CD8-positive, alpha-beta T cell (primary cell): ENCODE measurements at regions of chr3 and their contacts with region 1.

Region 1: DNA sequence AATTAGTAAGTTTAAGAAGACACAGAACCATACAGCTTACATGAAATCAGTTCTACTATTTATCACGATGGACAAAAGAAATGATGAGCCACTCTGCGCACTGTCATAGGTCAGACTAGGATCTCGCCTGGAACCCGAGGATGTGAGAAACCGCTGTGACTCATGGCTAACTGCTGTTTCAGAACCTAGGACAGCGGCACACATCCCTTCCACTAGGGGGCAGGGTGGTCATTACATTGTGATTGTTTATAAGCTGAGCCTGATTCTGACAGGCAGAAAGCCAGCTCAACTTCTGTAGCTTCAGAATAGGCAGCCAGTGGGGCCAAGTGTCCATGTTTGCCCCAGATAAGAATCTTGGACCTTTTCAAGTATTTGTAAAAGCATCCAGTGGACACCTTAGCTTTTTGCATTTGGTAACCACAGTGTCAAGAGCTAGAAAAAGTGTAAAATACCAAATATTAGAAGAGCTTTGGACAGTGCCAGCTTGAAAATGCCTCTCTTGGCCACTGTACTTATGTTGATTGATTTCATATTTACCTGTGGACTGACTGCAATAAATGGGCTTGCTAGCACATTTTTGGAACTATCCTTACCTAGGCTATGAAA is 115.8 kb downstream of the KBTBD8 start:
- DNase-seq: peak; percentile 58 to 84 (median 77)
- ATAC-seq: peak; percentile 96
- H3K4me3 ChIP-seq: no peak overlapping the region
- H3K4me3 Mint-ChIP-seq: no peak overlapping the region
- H3K27ac ChIP-seq: no peak overlapping the region
- H3K27ac Mint-ChIP-seq: no peak overlapping the region
- H3K4me1 ChIP-seq: no peaks in the 10 kb centered on the region
- H3K4me1 Mint-ChIP-seq: no peaks in the 10 kb centered on the region
- H3K27me3 ChIP-seq: no peaks in the 10 kb centered on the region
- H3K27me3 Mint-ChIP-seq: peaks cover 16% of the 10 kb centered on the region
- CTCF ChIP-seq: peak; percentile 78

Region 2: DNA sequence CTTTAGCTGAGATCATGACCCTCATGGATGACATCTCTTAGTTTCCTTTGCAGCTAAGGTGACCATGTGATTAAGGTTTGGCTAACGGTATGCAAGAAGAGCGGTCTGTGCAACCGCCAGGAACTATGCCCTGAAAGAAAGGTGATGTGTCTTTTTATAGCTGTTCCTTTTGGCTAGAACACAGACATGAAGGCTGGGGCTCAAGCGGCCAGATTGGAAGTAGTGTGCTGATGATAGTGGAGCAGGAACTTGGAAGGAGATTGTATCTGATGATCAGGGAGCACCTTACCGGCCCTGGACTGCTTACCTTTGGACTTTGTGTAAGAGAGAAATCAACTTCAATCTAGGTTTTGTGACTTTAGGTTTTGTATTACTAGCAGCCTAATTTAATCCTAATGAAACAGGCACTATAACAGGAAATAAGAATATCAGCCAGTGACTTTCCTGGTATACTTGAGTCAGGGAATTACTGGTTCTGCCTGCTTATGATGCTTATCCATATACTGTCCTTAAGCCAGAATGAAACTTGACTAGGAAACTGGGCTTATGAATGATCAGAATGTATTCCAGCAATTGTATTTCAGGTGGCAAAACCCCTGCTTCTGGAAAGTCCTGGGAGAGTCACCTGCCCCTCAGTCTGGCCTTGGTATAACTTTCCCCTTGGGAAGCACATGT is 448.7 kb before region 1 on chr3:
- CTCF ChIA-PET with region 1: no interaction called
- POLR2A ChIA-PET with region 1: no interaction called
- intact Hi-C with region 1: no loop called
- DNase-seq: no peak
- ATAC-seq: no peak
- H3K4me3 ChIP-seq: no peak overlapping the region
- H3K4me3 Mint-ChIP-seq: no peak overlapping the region
- H3K27ac ChIP-seq: no peak overlapping the region
- H3K27ac Mint-ChIP-seq: no peak overlapping the region
- H3K4me1 ChIP-seq: no peaks in the 10 kb centered on the region
- H3K4me1 Mint-ChIP-seq: no peaks in the 10 kb centered on the region
- H3K27me3 ChIP-seq: no peaks in the 10 kb centered on the region
- H3K27me3 Mint-ChIP-seq: peaks cover 2% of the 10 kb centered on the region
- CTCF ChIP-seq: no peak

Region 3: GRCh38 chr3:66998113-66998903 is 115.6 kb before region 1 on chr3 and contains the start of gene KBTBD8:
- CTCF ChIA-PET with region 1: no interaction called
- POLR2A ChIA-PET with region 1: no interaction called
- intact Hi-C with region 1: loop called in 1 of 2 experiments (anchors 2 kb)
- DNase-seq: peak; percentile 92 to 99 (median 97)
- ATAC-seq: peak; percentile 94
- H3K4me3 ChIP-seq: peak within 1 kb of the TSS; percentile 62 to 94
- H3K4me3 Mint-ChIP-seq: peak within 1 kb of the TSS; percentile 86
- H3K27ac ChIP-seq: peak within 1 kb of the TSS; percentile 53 to 63
- H3K27ac Mint-ChIP-seq: peak within 1 kb of the TSS; percentile 92
- H3K4me1 ChIP-seq: peaks cover 10% of the 10 kb centered on the region
- H3K4me1 Mint-ChIP-seq: peaks cover 32% of the 10 kb centered on the region
- H3K27me3 ChIP-seq: no peaks in the 10 kb centered on the region
- H3K27me3 Mint-ChIP-seq: peaks cover 14% of the 10 kb centered on the region
- CTCF ChIP-seq: no peak
- total RNA-seq, gene KBTBD8: 9.5 to 12.1 TPM

Region 4: DNA sequence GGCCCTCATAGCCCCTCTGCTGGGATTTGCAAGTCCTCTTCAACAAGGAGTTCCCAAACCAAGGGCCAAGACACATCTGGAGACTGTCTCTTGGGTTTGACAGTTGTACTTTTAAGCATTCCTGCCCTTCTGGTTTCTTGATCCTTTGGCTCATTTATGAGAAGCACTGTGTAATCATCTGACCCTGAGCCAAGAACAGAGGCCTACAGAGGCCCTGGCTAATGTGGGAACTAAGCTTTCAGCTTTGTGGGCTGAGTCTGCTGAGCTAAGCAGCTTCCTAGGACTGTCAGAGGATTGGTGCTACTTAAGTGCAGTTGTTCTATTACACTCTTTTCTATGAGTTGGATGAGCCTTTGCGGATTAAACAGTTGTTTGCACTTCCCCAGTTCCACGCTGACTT is 62.5 kb after region 1 on chr3:
- CTCF ChIA-PET with region 1: no interaction called
- POLR2A ChIA-PET with region 1: no interaction called
- intact Hi-C with region 1: no loop called
- DNase-seq: no peak
- ATAC-seq: no peak
- H3K4me3 ChIP-seq: no peak overlapping the region
- H3K4me3 Mint-ChIP-seq: no peak overlapping the region
- H3K27ac ChIP-seq: no peak overlapping the region
- H3K27ac Mint-ChIP-seq: no peak overlapping the region
- H3K4me1 ChIP-seq: no peaks in the 10 kb centered on the region
- H3K4me1 Mint-ChIP-seq: no peaks in the 10 kb centered on the region
- H3K27me3 ChIP-seq: no peaks in the 10 kb centered on the region
- H3K27me3 Mint-ChIP-seq: no peaks in the 10 kb centered on the region
- CTCF ChIP-seq: no peak

Region 5: GRCh38 chr3:67704322-67704721 is 590.4 kb after region 1 on chr3:
- CTCF ChIA-PET with region 1: interaction called, 4 read pairs
- POLR2A ChIA-PET with region 1: no interaction called
- intact Hi-C with region 1: loop called in 1 of 2 experiments (anchors 10 kb)
- DNase-seq: peak in 2 of 9 experiments; percentile 25 to 43
- ATAC-seq: no peak
- H3K4me3 ChIP-seq: no peak overlapping the region
- H3K4me3 Mint-ChIP-seq: no peak overlapping the region
- H3K27ac ChIP-seq: no peak overlapping the region
- H3K27ac Mint-ChIP-seq: no peak overlapping the region
- H3K4me1 ChIP-seq: no peaks in the 10 kb centered on the region
- H3K4me1 Mint-ChIP-seq: peaks cover 14% of the 10 kb centered on the region
- H3K27me3 ChIP-seq: no peaks in the 10 kb centered on the region
- H3K27me3 Mint-ChIP-seq: no peaks in the 10 kb centered on the region
- CTCF ChIP-seq: no peak

Region 6: DNA sequence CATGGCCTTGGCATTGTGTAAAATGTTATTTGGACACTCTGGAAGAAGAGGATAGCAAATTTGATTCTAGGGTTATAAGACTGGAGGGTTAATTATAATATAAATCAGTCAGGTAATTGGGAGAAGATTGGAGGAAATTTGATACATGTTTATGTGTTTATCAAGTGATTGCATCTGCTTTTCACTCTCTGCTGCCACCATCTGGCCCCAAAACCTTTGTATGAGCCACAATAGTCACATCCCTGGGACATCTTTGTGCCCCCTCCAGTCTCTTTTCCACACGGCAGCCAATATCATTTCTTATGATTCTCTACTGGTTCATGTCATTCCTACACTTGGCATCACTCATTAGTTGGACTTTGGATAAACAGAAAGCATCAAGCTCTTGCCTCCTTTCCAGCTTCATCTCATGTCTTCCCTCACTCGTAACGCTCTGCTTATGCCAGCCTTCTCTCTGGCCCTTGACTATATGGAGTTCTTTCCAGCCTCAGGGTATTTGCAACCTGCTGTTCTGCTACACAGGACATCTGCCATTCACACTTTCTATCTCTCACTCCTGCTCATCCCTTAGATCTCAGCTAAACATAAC is 1142.8 kb after region 1 on chr3:
- CTCF ChIA-PET with region 1: no interaction called
- POLR2A ChIA-PET with region 1: no interaction called
- intact Hi-C with region 1: loop called in 1 of 2 experiments (anchors 5 kb)
- DNase-seq: peak in 5 of 9 experiments; percentile 18 to 45 (median 28)
- ATAC-seq: no peak
- H3K4me3 ChIP-seq: no peak overlapping the region
- H3K4me3 Mint-ChIP-seq: no peak overlapping the region
- H3K27ac ChIP-seq: no peak overlapping the region
- H3K27ac Mint-ChIP-seq: no peak overlapping the region
- H3K4me1 ChIP-seq: no peaks in the 10 kb centered on the region
- H3K4me1 Mint-ChIP-seq: peaks cover 4% of the 10 kb centered on the region
- H3K27me3 ChIP-seq: no peaks in the 10 kb centered on the region
- H3K27me3 Mint-ChIP-seq: no peaks in the 10 kb centered on the region
- CTCF ChIP-seq: peak; percentile 34

Region 7: GRCh38 chr3:68676136-68676535 is 1562.2 kb after region 1 on chr3:
- CTCF ChIA-PET with region 1: no interaction called
- POLR2A ChIA-PET with region 1: no interaction called
- intact Hi-C with region 1: no loop called
- DNase-seq: no peak
- ATAC-seq: no peak
- H3K4me3 ChIP-seq: no peak overlapping the region
- H3K4me3 Mint-ChIP-seq: no peak overlapping the region
- H3K27ac ChIP-seq: no peak overlapping the region
- H3K27ac Mint-ChIP-seq: no peak overlapping the region
- H3K4me1 ChIP-seq: no peaks in the 10 kb centered on the region
- H3K4me1 Mint-ChIP-seq: no peaks in the 10 kb centered on the region
- H3K27me3 ChIP-seq: no peaks in the 10 kb centered on the region
- H3K27me3 Mint-ChIP-seq: no peaks in the 10 kb centered on the region
- CTCF ChIP-seq: no peak

Region 8: GRCh38 chr3:68876112-68876713 is 1762.3 kb after region 1 on chr3:
- CTCF ChIA-PET with region 1: interaction called, 87 read pairs
- POLR2A ChIA-PET with region 1: no interaction called
- intact Hi-C with region 1: loop called (anchors 1 kb)
- DNase-seq: peak in 4 of 9 experiments; percentile 18 to 69 (median 45)
- ATAC-seq: peak; percentile 61
- H3K4me3 ChIP-seq: no peak overlapping the region
- H3K4me3 Mint-ChIP-seq: no peak overlapping the region
- H3K27ac ChIP-seq: no peak overlapping the region
- H3K27ac Mint-ChIP-seq: no peak overlapping the region
- H3K4me1 ChIP-seq: no peaks in the 10 kb centered on the region
- H3K4me1 Mint-ChIP-seq: no peaks in the 10 kb centered on the region
- H3K27me3 ChIP-seq: peaks cover 0 to 3% of the 10 kb centered on the region in 2 experiments
- H3K27me3 Mint-ChIP-seq: peaks cover 14% of the 10 kb centered on the region
- CTCF ChIP-seq: peak; percentile 87

Region 9: GRCh38 chr3:68972358-68972979 is 1858.6 kb after region 1 on chr3:
- CTCF ChIA-PET with region 1: interaction called, 3 read pairs
- POLR2A ChIA-PET with region 1: no interaction called
- intact Hi-C with region 1: loop called in 1 of 2 experiments (anchors 5 kb)
- DNase-seq: peak in 8 of 9 experiments; percentile 2 to 53 (median 32)
- ATAC-seq: no peak
- H3K4me3 ChIP-seq: no peak overlapping the region
- H3K4me3 Mint-ChIP-seq: no peak overlapping the region
- H3K27ac ChIP-seq: no peak overlapping the region
- H3K27ac Mint-ChIP-seq: no peak overlapping the region
- H3K4me1 ChIP-seq: no peaks in the 10 kb centered on the region
- H3K4me1 Mint-ChIP-seq: no peaks in the 10 kb centered on the region
- H3K27me3 ChIP-seq: no peaks in the 10 kb centered on the region
- H3K27me3 Mint-ChIP-seq: peaks cover 3% of the 10 kb centered on the region
- CTCF ChIP-seq: no peak